ENCODE measurements at regions of chr5 and their contacts with region 1.

Region 1: DNA sequence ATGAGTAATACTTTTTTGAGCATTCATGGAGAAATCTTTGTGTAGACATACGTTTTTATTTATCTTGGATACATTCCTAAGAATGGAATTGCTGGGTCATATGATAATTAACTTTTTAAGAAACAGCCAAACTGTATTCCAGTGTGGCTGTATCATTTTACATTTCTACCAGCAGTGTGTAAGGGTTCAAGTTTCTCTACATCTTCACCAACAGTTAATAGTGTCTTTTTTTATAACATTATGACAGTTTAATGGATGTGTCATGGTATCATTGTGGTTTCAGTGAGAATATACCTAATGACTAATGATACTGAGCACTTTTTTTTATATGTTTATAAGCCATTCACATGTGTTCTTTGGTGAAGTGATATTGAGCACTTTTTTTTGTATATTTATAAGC is 52.4 kb downstream of the NIPBL start:
- DNase-seq: no peak
- H3K4me3 Mint-ChIP-seq: no peak overlapping the region
- H3K27ac Mint-ChIP-seq: no peak overlapping the region
- H3K4me1 Mint-ChIP-seq: peaks cover 26% of the 10 kb centered on the region
- H3K27me3 Mint-ChIP-seq: no peaks in the 10 kb centered on the region
- CTCF ChIP-seq: no peak

Region 2: DNA sequence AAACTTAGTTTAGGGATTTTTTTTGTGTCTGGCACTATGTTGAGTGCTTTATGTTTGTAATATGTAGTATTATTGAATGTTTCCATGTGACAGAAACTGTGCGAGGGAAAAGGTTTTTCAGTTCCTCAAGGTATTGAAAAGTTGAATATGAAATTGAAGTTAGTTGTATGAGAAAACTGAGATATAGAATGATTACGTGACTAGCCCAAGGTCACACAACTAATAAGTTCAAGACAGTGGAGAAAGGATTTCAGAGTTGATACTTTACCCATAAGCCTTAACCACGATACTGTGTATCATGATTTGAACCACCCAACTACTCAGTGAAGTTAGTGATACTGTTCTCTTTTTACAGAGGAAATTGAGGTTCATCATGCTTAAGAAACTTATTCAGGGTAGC is 46.7 kb before region 1 on chr5:
- CTCF ChIA-PET with region 1: no interaction called
- intact Hi-C with region 1: loop called (anchors 5 kb)
- DNase-seq: no peak
- H3K4me3 Mint-ChIP-seq: no peak overlapping the region
- H3K27ac Mint-ChIP-seq: no peak overlapping the region
- H3K4me1 Mint-ChIP-seq: peaks cover 18% of the 10 kb centered on the region
- H3K27me3 Mint-ChIP-seq: no peaks in the 10 kb centered on the region
- CTCF ChIP-seq: no peak

Measured in Calu3 (cell line).